Breast epithelium (tissue), 4 donors: ENCODE measurements at regions of chrX and their contacts with region 1.

Region 1: DNA sequence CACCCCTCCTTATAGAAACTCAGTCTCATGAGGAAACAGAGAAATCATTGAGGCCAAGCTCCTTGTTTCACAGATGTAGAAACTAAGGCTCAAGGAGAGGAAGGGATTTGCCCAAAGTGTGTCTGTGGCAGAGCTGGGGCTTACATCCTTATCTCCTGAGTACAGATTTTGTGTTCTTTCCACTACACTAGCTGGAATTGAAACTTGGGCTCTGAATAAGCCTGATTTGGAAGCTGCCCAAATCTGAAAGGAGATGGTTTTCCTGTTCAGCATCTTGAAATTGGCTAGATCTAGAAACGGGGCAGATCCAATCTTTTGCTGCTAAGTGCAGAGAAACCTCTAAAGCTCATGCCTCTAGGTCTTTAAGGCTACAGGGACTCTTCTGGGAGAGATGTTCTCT is 24.3 kb downstream of the AWAT2 start:
- DNase-seq: no peak
- H3K4me3 ChIP-seq: no peak overlapping the region
- H3K27ac ChIP-seq: no peak overlapping the region
- H3K4me1 ChIP-seq: no peaks in the 10 kb centered on the region
- H3K27me3 ChIP-seq: peaks cover 0 to 54% of the 10 kb centered on the region in 2 donors
- CTCF ChIP-seq: no peak
- POLR2A ChIP-seq: no peak

Region 2: DNA sequence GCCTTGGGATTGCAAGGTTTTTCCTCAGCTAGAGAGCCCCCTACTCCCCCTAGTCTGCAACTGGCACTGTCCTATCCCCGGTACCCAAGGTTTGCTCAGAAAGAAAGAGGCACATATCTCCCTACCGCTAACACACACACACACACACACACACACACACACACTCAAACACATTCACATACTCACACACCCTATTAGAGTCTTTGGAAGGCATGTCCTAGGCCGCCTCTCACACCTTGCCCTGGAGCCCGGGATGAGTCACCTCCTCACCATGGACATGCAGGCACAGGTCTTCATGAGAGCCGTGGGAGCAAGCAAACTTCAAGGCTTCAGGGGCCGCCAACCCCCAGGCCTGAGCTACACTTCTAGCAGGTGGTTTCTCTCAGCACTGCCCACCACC is 909.4 kb before region 1 on chrX:
- intact Hi-C with region 1: no loop called
- DNase-seq: peak in 1 of 2 donors; percentile 67
- H3K4me3 ChIP-seq: no peak overlapping the region
- H3K27ac ChIP-seq: no peak overlapping the region
- H3K4me1 ChIP-seq: no peaks in the 10 kb centered on the region
- H3K27me3 ChIP-seq: peaks cover 0 to 50% of the 10 kb centered on the region in 2 donors
- CTCF ChIP-seq: no peak
- POLR2A ChIP-seq: no peak

Region 3: DNA sequence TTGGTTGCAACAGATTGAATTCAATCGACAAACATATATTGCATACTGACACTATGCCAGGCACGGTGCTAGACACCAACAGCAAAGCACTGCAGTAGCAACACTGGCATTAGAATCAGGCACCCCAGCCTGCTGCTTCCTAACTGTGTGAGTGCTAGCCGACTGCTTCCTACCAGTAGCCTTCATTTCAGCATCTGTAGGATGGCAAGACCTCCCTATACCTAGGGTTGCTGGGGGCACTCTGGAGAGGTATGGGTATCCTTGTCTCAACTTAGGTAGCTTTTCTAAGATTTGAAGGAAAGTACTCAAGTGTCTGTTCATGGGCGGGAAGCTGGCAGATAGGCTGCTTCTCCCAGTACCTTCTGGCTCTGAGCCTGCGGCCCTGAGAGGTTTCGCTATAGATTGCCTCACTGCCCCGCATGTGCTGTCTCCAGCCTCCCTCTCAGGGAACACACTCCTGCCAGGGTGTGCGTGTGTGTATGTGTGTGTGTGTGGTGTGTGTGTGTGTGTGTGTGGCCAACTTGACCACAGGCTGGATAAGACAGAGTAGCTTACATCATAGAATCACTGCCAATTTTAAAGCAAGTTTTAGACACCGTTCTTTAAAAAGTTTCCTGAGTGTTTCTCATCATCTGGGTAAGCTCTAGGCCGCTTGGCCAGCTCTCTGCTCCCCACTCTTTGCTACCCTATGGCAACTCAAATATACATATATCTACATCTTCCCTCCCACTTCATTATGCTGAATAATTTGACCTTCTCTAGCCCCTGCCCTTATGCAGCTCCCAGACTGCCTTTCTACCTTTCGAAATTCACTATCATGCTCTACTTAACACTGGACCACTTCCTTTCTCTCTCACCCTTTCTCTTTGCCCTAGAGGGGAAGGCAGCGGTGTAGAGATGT is 763.2 kb before region 1 on chrX:
- intact Hi-C with region 1: loop called (anchors 5 kb)
- DNase-seq: no peak
- H3K4me3 ChIP-seq: no peak overlapping the region
- H3K27ac ChIP-seq: no peak overlapping the region
- H3K4me1 ChIP-seq: no peaks in the 10 kb centered on the region
- H3K27me3 ChIP-seq: peaks cover 0 to 65% of the 10 kb centered on the region in 2 donors
- CTCF ChIP-seq: no peak
- POLR2A ChIP-seq: no peak

Region 4: GRCh38 chrX:70049925-70050324 is 24.5 kb after region 1 on chrX and contains the start of gene AWAT2:
- intact Hi-C with region 1: no loop called
- DNase-seq: no peak
- H3K4me3 ChIP-seq: no peak within 1 kb of the TSS
- H3K27ac ChIP-seq: no peak within 1 kb of the TSS
- H3K4me1 ChIP-seq: no peaks in the 10 kb centered on the region
- H3K27me3 ChIP-seq: peaks cover 0 to 53% of the 10 kb centered on the region in 2 donors
- CTCF ChIP-seq: no peak
- POLR2A ChIP-seq: no peak
- total RNA-seq, gene AWAT2: not detected